MCF 10A (cell line): ENCODE measurements at regions of chr3 and their contacts with region 1.

Region 1: GRCh38 chr3:130892759-130893375 is 1.0 kb upstream of the ATP2C1 start:
- DNase-seq: peak; percentile 85
- H3K4me3 Mint-ChIP-seq: peak overlapping the region; percentile 83
- H3K27ac Mint-ChIP-seq: peak overlapping the region; percentile 98
- H3K4me1 Mint-ChIP-seq: peaks cover 12% of the 10 kb centered on the region
- H3K27me3 Mint-ChIP-seq: no peaks in the 10 kb centered on the region
- CTCF ChIP-seq: peak; percentile 68

Region 2: DNA sequence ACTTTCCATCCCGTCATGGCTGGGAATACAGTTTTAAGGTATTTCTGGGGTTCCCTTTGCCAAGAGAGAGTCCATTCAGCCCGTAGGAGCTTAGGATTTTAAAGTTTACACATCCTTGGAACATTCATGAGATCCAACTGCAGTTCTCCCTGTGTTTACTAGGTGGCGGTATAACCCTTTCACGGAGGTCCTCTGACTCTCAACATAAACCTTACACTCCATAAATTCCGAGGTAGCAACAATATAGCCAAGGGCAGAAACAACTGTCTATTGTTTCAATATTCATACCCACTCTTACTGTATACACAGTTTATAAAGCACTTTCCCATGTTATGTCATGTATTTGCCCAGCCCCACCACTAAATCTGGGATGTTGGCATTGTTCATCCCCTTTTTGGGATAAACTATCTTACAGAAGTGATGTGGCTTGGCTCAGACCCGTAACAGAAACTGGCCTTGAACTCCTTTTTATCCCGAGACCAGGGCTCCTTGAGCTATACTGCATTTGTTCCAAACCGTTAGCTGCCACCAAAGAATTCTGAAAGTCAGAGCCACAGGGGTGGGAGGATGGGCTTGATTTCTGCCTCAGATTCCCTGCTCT is 616.6 kb before region 1 on chr3:
- CTCF ChIA-PET with region 1: no interaction called
- POLR2A ChIA-PET with region 1: interaction called, 3 read pairs
- intact Hi-C with region 1: loop called (anchors 1 kb)
- DNase-seq: peak; percentile 66
- H3K4me3 Mint-ChIP-seq: no peak overlapping the region
- H3K27ac Mint-ChIP-seq: no peak overlapping the region
- H3K4me1 Mint-ChIP-seq: no peaks in the 10 kb centered on the region
- H3K27me3 Mint-ChIP-seq: peaks cover 20% of the 10 kb centered on the region
- CTCF ChIP-seq: peak; percentile 85

Region 3: GRCh38 chr3:130649061-130649654 is 243.7 kb before region 1 on chr3:
- CTCF ChIA-PET with region 1: no interaction called
- POLR2A ChIA-PET with region 1: no interaction called
- intact Hi-C with region 1: no loop called
- DNase-seq: no peak
- H3K4me3 Mint-ChIP-seq: no peak overlapping the region
- H3K27ac Mint-ChIP-seq: no peak overlapping the region
- H3K4me1 Mint-ChIP-seq: no peaks in the 10 kb centered on the region
- H3K27me3 Mint-ChIP-seq: no peaks in the 10 kb centered on the region
- CTCF ChIP-seq: no peak

Region 4: GRCh38 chr3:130715616-130716015 is 177.3 kb before region 1 on chr3:
- CTCF ChIA-PET with region 1: interaction called, 10 read pairs
- POLR2A ChIA-PET with region 1: no interaction called
- intact Hi-C with region 1: no loop called
- DNase-seq: no peak
- H3K4me3 Mint-ChIP-seq: no peak overlapping the region
- H3K27ac Mint-ChIP-seq: no peak overlapping the region
- H3K4me1 Mint-ChIP-seq: no peaks in the 10 kb centered on the region
- H3K27me3 Mint-ChIP-seq: no peaks in the 10 kb centered on the region
- CTCF ChIP-seq: no peak

Region 5: DNA sequence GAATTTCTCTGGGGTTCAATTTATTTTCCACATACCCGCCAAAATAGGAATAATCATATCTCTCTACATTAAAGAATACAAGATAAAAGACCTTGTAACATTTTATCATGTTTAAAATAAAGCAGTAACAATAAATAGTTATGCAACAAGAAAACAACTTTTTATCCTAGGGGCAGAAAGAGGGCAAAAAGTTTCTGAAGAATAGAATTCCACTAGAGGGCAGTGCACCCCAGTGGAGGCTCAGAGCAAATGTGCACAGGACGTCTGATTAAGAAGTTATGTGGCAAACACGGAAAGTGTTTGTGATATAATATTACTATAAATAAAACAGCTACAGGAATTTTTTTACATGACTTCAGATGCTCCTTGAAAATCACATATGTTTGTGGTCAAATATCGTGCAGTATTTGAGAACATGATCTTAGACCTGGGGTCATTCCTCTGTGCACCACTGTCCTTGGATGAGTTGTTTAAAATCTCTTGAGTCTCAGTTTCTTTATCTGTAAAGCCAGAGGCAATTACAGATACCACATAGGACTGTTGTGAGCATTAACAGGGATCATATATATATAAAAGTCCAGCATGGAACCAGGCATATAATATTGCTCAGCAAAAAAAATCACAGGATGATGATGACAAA is 133.0 kb before region 1 on chr3:
- CTCF ChIA-PET with region 1: interaction called, 114 read pairs
- POLR2A ChIA-PET with region 1: interaction called, 51 read pairs
- intact Hi-C with region 1: loop called (anchors 1 kb)
- DNase-seq: peak; percentile 71
- H3K4me3 Mint-ChIP-seq: no peak overlapping the region
- H3K27ac Mint-ChIP-seq: no peak overlapping the region
- H3K4me1 Mint-ChIP-seq: peaks cover 5% of the 10 kb centered on the region
- H3K27me3 Mint-ChIP-seq: peaks cover 11% of the 10 kb centered on the region
- CTCF ChIP-seq: peak; percentile 81

Region 6: DNA sequence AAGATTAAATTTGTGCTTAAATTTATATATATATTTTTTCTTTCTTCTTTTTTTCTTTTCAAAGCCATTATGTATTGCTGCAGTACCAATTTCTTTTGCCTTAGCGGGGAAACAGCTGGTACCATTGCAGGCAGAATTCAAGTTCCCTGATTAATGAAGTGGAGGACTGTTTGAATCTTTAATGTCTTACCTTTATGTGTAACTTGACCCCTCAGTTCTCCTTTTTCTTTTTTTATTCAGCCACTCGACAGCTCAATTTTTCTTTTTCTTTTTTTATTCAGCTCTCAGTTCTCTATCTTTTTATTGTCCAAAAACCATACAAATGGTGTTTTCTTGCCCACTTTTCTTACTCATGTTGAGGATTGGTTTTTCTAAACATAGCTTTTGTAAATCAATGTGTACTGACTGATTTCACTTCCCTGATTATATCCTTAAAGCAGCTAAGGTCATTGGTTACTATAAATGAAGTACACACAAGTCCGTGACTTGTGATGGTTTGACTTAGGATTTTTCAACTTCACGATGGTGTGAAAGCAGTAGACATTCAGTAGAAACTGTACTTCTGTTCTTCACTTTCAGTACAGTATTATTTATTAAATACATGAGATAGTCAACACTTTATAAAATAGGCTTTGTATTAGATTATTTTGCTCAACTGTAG is 23.8 kb after region 1 on chr3:
- CTCF ChIA-PET with region 1: interaction called, 12 read pairs
- POLR2A ChIA-PET with region 1: interaction called, 4 read pairs
- intact Hi-C with region 1: no loop called
- DNase-seq: no peak
- H3K4me3 Mint-ChIP-seq: no peak overlapping the region
- H3K27ac Mint-ChIP-seq: no peak overlapping the region
- H3K4me1 Mint-ChIP-seq: peaks cover 6% of the 10 kb centered on the region
- H3K27me3 Mint-ChIP-seq: no peaks in the 10 kb centered on the region
- CTCF ChIP-seq: no peak

Region 7: DNA sequence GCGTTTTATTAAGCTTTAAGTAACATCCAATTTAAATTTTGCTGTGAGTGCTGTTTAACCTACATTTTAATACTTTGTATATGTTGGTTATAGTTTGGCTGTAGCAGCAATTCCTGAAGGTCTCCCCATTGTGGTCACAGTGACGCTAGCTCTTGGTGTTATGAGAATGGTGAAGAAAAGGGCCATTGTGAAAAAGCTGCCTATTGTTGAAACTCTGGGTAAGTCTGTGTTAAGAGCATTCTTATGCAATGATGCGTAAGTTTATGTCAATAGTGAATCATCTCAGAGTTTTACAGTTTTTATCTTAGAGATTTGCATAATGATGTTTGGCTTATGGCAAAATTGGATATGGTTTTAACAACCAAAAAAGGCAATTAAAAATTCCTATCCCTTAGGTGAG is 71.0 kb after region 1 on chr3:
- CTCF ChIA-PET with region 1: no interaction called
- POLR2A ChIA-PET with region 1: interaction called, 7 read pairs
- intact Hi-C with region 1: loop called (anchors 1 kb)
- DNase-seq: peak; percentile 90
- H3K4me3 Mint-ChIP-seq: no peak overlapping the region
- H3K27ac Mint-ChIP-seq: peak overlapping the region; percentile 78
- H3K4me1 Mint-ChIP-seq: peaks cover 17% of the 10 kb centered on the region
- H3K27me3 Mint-ChIP-seq: no peaks in the 10 kb centered on the region
- CTCF ChIP-seq: no peak

Region 8: DNA sequence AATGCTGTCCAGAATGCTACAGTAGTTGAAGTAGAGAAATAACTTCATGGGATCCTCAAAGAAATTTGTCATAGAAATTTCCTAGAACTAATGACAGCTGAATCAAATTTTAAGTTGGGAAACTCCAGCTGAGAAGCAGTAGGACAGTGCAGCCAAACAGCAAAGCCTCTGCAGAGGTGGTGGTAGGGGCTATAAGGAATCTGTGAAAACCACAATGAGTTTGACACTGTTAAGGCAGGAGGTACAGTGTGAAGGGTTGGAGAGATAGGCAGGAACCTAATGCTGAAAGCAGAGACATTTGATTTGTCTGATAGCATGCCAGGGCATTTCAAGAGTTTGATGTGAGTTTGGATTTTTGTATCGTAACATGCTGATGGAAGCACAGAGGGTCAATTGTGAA is 111.7 kb after region 1 on chr3:
- CTCF ChIA-PET with region 1: no interaction called
- POLR2A ChIA-PET with region 1: interaction called, 3 read pairs
- intact Hi-C with region 1: loop called (anchors 5 kb)
- DNase-seq: no peak
- H3K4me3 Mint-ChIP-seq: no peak overlapping the region
- H3K27ac Mint-ChIP-seq: no peak overlapping the region
- H3K4me1 Mint-ChIP-seq: no peaks in the 10 kb centered on the region
- H3K27me3 Mint-ChIP-seq: no peaks in the 10 kb centered on the region
- CTCF ChIP-seq: no peak

Region 9: DNA sequence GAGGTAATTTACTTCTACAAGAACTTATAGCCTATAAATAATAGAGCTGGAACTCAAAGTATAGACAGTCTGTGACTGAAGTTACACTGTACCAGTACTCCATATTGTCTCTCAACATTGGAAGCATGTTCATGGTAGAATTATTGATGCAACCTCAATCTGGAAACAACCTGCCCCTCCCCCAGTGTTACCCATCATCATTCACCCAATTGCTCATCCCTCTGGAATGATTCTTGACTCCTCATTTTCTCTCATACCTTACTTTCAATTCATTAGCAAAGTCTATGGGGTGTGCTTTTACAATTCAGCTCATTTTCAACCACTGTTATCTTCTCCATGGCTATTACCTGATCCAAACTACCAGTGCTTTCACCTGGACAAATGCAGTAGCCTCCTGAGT is 990.2 kb after region 1 on chr3:
- CTCF ChIA-PET with region 1: no interaction called
- POLR2A ChIA-PET with region 1: no interaction called
- intact Hi-C with region 1: no loop called
- DNase-seq: no peak
- H3K4me3 Mint-ChIP-seq: no peak overlapping the region
- H3K27ac Mint-ChIP-seq: no peak overlapping the region
- H3K4me1 Mint-ChIP-seq: no peaks in the 10 kb centered on the region
- H3K27me3 Mint-ChIP-seq: no peaks in the 10 kb centered on the region
- CTCF ChIP-seq: no peak